ENCODE measurements at regions of chrX and their contacts with region 1.

Region 1: GRCh38 chrX:120477453-120477852 is 8.4 kb upstream of the LAMP2 start:
- DNase-seq: no peak
- H3K4me3 ChIP-seq: no peak overlapping the region
- H3K27ac ChIP-seq: no peak overlapping the region
- H3K27me3 ChIP-seq: peaks cover 0 to 48% (median 14%) of the 10 kb centered on the region in 45 donors
- CTCF ChIP-seq: no peak

Region 2: GRCh38 chrX:119971184-119971583 is 506.3 kb before region 1 on chrX:
- intact Hi-C with region 1: no loop called
- DNase-seq: no peak
- H3K4me3 ChIP-seq: no peak overlapping the region
- H3K27ac ChIP-seq: no peak overlapping the region
- H3K27me3 ChIP-seq: peaks cover 0 to 9% (median 0%) of the 10 kb centered on the region in 45 donors
- CTCF ChIP-seq: no peak

Region 3: GRCh38 chrX:120310861-120311726 is 166.4 kb before region 1 on chrX and contains the start of gene TMEM255A:
- intact Hi-C with region 1: loop called in 1 of 2 experiments (anchors 10 kb)
- DNase-seq: peak in 8 of 10 donors; percentile 20 to 58 (median 40)
- H3K4me3 ChIP-seq: peak within 1 kb of the TSS; percentile 15 to 73 (median 53)
- H3K27ac ChIP-seq: peak within 1 kb of the TSS in 1 of 59 donors; percentile 27
- H3K27me3 ChIP-seq: peaks cover 0 to 95% (median 47%) of the 10 kb centered on the region in 45 donors
- CTCF ChIP-seq: peak in 2 of 56 donors; percentile 14 to 15
- total RNA-seq, gene TMEM255A: 2.5 to 12.3 (median 6.3) TPM

Region 4: GRCh38 chrX:120372667-120373370 is 104.6 kb before region 1 on chrX:
- intact Hi-C with region 1: no loop called
- DNase-seq: no peak
- H3K4me3 ChIP-seq: no peak overlapping the region
- H3K27ac ChIP-seq: peak overlapping the region in 1 of 59 donors; percentile 12
- H3K27me3 ChIP-seq: peaks cover 0 to 71% (median 7%) of the 10 kb centered on the region in 45 donors
- CTCF ChIP-seq: no peak

Region 5: GRCh38 chrX:120522820-120523219 is 45.4 kb after region 1 on chrX:
- intact Hi-C with region 1: no loop called
- DNase-seq: no peak
- H3K4me3 ChIP-seq: no peak overlapping the region
- H3K27ac ChIP-seq: no peak overlapping the region
- H3K27me3 ChIP-seq: peaks cover 0 to 9% (median 0%) of the 10 kb centered on the region in 45 donors
- CTCF ChIP-seq: no peak